ENCODE measurements at regions of chr6 and their contacts with region 1.

Region 1: GRCh38 chr6:97059473-97059872 is 134.9 kb downstream of the KLHL32 start:
- DNase-seq: peak; percentile 68
- CTCF ChIP-seq: peak; percentile 59

Region 2: DNA sequence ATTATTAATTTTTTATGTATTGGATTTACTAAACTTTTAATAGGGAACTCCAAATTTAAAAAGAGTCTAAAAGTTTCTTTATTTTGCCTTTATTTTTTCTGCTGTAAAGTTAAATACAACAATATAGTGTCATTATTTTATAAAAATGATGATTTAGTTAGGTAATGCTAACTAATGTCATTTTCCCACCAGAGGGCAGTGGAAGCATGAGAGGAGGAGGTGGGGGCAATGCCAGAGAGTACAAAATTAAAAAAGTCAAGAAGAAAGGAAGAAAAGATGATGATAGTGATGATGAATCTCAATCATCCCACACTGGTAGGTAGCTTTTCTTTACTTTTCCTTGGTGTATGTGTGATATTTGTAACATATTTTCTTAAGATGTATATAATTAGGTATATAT is 516.8 kb before region 1 on chr6:
- in situ Hi-C with region 1: loop called (anchors 25 kb)
- DNase-seq: no peak
- CTCF ChIP-seq: peak; percentile 46

Region 3: GRCh38 chr6:96907498-96907897 is 152.0 kb before region 1 on chr6:
- in situ Hi-C with region 1: loop called (anchors 10 kb)
- DNase-seq: no peak
- CTCF ChIP-seq: no peak